Activated CD4-positive, alpha-beta memory T cell treated with anti-CD3 and anti-CD28 coated beads, Interleukin-2, amount 10 ng/mL, durations not matched to agents 7 days and 5 days (primary cell): ENCODE measurements at regions of chr6 and their contacts with region 1.

Region 1: GRCh38 chr6:169803271-169803811 is 51.9 kb downstream of the ERMARD start:
- DNase-seq: peak; percentile 29
- H3K4me3 Mint-ChIP-seq: no peak overlapping the region
- H3K27ac Mint-ChIP-seq: no peak overlapping the region
- H3K4me1 Mint-ChIP-seq: peaks cover 42% of the 10 kb centered on the region
- H3K27me3 Mint-ChIP-seq: peaks cover 50% of the 10 kb centered on the region

Region 2: DNA sequence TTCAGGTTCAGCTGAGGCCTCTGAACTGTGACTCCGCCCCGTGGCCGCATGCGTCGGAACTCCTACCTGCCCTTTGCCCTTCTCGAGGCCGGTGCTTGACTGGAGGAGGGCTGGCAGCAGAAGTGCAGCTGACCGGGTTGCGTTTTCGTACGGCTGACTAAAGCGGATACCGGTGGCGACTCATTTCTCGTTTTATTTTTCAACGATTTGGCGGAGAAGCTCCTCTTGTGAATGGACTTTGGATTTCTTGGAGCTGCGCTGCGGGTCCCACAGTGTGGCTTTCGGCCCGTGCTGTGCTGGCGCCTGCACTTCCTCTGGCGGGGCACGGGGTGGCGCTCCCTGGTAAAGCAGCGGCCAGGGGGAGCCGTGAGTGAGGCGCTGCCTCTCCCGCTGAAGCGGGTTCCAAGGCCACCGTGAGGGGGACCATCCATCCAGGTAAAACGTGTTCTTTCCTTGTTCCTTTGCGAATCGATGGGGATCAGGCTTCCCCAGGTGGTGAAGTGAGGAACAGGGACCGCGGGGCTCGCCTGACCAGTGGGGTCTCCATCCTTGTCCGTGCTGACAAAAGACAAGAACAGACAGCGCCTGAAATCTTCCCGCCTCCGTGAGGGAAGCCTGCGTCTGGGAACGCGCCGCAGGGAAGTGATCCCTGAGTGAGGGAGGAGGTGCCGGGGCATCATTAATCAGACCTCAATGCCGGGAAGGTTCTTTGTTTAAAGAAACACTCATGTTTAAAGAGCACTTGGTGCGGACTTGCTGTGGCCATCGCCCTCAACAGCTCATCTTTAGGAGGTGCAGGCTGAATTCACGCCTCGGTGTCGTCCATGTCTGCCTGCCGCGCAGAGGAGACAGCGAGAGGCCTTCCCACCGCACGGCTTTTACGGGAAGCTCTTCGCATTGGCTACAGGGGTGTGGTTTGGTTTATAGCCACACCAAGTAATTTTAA is 13.1 kb before region 1 on chr6:
- CTCF ChIA-PET with region 1: interaction called, 72 read pairs
- POLR2A ChIA-PET with region 1: interaction called, 10 read pairs
- DNase-seq: peak; percentile 79
- H3K4me3 Mint-ChIP-seq: peak overlapping the region; percentile 75
- H3K27ac Mint-ChIP-seq: no peak overlapping the region
- H3K4me1 Mint-ChIP-seq: peaks cover 22% of the 10 kb centered on the region
- H3K27me3 Mint-ChIP-seq: peaks cover 27% of the 10 kb centered on the region